ENCODE measurements at regions of chr2 and their contacts with region 1.

Region 1: GRCh38 chr2:28274911-28275695 is 117.6 kb upstream of the FOSL2 start:
- DNase-seq: no peak
- H3K4me3 ChIP-seq: no peak overlapping the region
- H3K27ac ChIP-seq: no peak overlapping the region
- H3K4me1 ChIP-seq: peaks cover 4% of the 10 kb centered on the region
- H3K27me3 ChIP-seq: no peaks in the 10 kb centered on the region
- CTCF ChIP-seq: no peak
- POLR2A ChIP-seq: no peak

Region 2: GRCh38 chr2:27832396-27832795 is 442.7 kb before region 1 on chr2:
- intact Hi-C with region 1: no loop called
- DNase-seq: no peak
- H3K4me3 ChIP-seq: no peak overlapping the region
- H3K27ac ChIP-seq: no peak overlapping the region
- H3K4me1 ChIP-seq: peaks cover 3% of the 10 kb centered on the region
- H3K27me3 ChIP-seq: no peaks in the 10 kb centered on the region
- CTCF ChIP-seq: no peak
- POLR2A ChIP-seq: no peak

Region 3: DNA sequence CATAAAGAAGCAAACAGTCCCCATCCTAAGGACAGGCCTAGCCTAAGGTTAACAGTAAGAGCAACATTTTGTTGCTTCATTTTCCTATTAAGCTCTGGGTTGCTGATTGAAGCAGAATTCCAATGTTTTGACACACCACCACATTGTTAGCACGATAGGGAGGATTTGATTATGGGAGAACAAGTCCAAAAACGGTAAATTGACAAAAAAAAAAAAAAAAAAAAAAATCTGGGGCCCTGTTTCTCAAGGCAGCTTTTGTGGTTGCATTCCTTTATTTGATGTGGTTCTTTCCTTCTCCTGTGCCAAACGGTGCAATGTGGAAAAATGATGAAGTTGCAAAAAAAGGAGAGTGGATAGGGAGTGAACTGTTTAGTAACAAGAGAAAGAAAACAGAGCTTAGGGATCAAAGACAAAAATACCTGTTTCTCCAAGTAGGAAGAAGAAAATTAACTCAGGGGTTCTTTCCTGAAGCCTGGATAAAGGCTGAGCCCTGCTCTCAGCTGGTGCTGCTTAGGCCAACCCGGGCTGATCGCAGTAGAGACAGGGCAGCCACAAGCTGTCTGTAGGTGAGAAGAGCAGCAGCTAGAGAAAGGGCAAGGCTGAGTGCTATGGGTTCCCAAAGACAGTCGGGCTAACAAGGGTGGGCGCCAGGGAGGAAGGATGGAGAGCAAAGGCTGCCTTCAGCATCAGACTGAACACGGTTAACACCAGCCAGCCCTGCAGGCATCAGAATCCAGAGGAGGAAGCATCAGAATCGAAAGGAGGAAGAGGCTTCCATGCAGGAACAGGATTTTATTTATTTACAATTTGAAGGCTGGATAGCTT is 50.2 kb before region 1 on chr2:
- intact Hi-C with region 1: loop called (anchors 5 kb)
- DNase-seq: peak; percentile 10
- H3K4me3 ChIP-seq: no peak overlapping the region
- H3K27ac ChIP-seq: peak overlapping the region; percentile 47 to 62
- H3K4me1 ChIP-seq: no peaks in the 10 kb centered on the region
- H3K27me3 ChIP-seq: no peaks in the 10 kb centered on the region
- CTCF ChIP-seq: no peak
- POLR2A ChIP-seq: no peak